ENCODE measurements at regions of chr5 and their contacts with region 1.

Region 1: GRCh38 chr5:78600687-78601414 is 47.7 kb downstream of the LHFPL2 start:
- DNase-seq: no peak
- ATAC-seq: peak in 2 of 8 donors; percentile 21 to 27
- H3K4me3 ChIP-seq: no peak overlapping the region
- H3K27ac ChIP-seq: peak overlapping the region in 6 of 10 donors; percentile 2 to 48 (median 35)
- H3K4me1 ChIP-seq: peaks cover 0 to 44% (median 24%) of the 10 kb centered on the region in 9 donors
- H3K27me3 ChIP-seq: no peaks in the 10 kb centered on the region
- CTCF ChIP-seq: no peak

Region 2: DNA sequence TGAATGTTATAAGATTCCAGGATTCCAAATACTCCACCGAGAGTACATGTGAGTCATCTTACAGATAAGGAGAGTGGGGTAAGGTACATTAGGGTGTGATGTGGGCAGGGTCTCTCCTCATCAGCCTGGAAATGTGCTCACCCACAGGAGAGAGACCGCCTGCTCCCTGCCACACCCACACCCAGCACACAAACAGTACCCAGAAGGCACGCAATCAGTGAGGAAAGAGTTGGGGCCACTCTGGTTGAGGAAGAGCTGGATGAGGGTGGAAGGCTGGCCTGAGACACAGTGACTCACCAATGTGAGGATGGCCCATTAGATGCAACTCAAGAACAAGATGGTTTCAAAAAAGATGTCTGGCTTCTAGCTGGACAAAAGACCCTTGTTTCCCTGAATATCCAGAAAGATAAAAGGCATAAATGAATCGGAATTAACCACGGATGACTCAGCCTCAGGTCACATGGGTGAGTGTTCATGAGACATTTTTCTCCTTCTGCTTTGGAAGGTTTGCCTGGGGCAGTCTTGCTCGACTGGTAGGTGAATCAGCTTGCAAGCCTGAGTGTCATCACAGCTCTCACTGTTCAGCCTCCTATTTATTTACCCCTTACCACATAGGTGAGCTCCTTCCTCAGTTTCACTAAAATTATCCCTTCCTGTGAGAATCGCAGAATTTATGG is 98.9 kb after region 1 on chr5:
- intact Hi-C with region 1: loop called in 1 of 10 experiments (anchors 10 kb)
- DNase-seq: no peak
- ATAC-seq: peak in 1 of 8 donors; percentile 76
- H3K4me3 ChIP-seq: no peak overlapping the region
- H3K27ac ChIP-seq: peak overlapping the region in 2 of 10 donors; percentile 34 to 40
- H3K4me1 ChIP-seq: peaks cover 0 to 16% (median 0%) of the 10 kb centered on the region in 9 donors
- H3K27me3 ChIP-seq: no peaks in the 10 kb centered on the region
- CTCF ChIP-seq: no peak